ENCODE measurements at regions of chr7 and their contacts with region 1.

Region 1: DNA sequence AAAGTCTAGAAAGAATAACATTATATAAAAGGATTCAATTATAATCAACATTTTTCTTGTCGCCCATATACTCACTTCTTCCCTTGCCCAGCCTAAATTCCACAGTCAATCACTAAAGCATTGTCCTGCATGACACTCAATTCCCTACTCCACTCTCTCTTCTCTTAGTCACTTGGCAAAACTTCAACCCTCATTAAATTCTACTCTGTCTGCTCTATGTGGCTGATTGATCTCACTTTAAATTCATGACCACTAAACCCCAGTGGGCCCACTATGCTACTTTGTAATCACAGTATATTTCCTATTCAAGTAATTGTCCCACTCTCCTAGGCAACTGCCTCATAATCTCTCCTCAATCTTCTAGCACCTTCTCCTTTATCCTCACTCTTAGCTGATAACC is 54.1 kb downstream of the MTERF1 start:
- DNase-seq: peak; percentile 48
- H3K4me3 ChIP-seq: no peak overlapping the region
- H3K27ac ChIP-seq: no peak overlapping the region
- H3K4me1 ChIP-seq: no peaks in the 10 kb centered on the region
- H3K27me3 ChIP-seq: no peaks in the 10 kb centered on the region
- CTCF ChIP-seq: no peak

Region 2: GRCh38 chr7:91852263-91852741 is 25.9 kb after region 1 on chr7:
- CTCF ChIA-PET with region 1: interaction called, 7 read pairs
- dilution Hi-C with region 1: no loop called
- in situ Hi-C with region 1: no loop called
- intact Hi-C with region 1: loop called (anchors 1 kb)
- DNase-seq: peak; percentile 83
- H3K4me3 ChIP-seq: no peak overlapping the region
- H3K27ac ChIP-seq: no peak overlapping the region
- H3K4me1 ChIP-seq: peaks cover 28% of the 10 kb centered on the region
- H3K27me3 ChIP-seq: no peaks in the 10 kb centered on the region
- CTCF ChIP-seq: peak; percentile 61 to 64

Measured in mammary epithelial cell (primary cell).